IMR-90 (cell line): ENCODE measurements at regions of chr11 and their contacts with region 1.

Region 1: DNA sequence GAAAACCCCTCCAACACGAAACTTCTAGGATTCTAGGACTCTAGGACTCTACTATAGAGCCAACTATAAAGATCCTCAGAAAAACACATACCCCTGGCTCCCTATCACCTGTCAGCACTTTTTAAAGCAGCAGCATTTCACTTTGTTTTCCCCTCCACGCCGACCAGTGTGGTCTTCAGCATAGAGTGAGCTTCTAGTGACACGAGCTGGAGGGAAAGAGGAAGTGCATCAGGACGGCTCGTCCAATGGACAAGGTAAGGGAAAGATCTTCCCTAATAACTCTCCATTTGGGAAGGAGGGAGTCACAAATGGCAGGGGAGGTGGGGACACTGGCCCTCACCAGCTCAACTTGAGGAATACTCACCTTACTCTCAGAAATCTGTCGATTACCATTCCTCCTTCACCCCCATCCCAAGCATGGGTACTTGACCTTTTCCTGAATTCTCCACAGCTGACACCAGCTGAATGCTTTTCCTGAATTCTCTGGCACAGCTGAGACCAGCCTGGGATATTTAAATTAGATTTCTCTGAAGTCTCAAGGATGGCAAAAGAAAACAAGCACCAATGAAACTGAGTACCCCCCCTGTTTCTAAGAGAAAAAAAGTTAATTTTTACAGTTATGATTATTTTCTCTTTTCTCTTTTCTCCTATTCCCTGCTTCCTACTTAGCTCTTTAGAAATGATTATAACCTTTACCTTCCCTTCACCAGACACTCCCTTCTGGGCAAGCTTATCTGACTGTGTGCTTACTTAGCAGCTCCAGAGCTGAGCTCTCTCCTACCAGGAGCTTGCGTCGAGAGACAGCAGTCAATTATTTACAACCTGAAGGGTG is 33.3 kb upstream of the NNMT start:
- DNase-seq: peak; percentile 54
- ATAC-seq: peak; percentile 91
- H3K4me3 ChIP-seq: no peak overlapping the region
- H3K27ac ChIP-seq: no peak overlapping the region
- H3K4me1 ChIP-seq: no peaks in the 10 kb centered on the region
- H3K27me3 ChIP-seq: peaks cover 43% of the 10 kb centered on the region
- CTCF ChIP-seq: peak; percentile 73
- POLR2A ChIP-seq: no peak
- RAD21 ChIP-seq: peak; percentile 83

Region 2: GRCh38 chr11:112514011-112514740 is 1748.7 kb before region 1 on chr11:
- CTCF ChIA-PET with region 1: no interaction called
- POLR2A ChIA-PET with region 1: no interaction called
- dilution Hi-C with region 1: no loop called
- in situ Hi-C with region 1: no loop called
- intact Hi-C with region 1: loop called (anchors 5 kb)
- DNase-seq: no peak
- ATAC-seq: no peak
- H3K4me3 ChIP-seq: no peak overlapping the region
- H3K27ac ChIP-seq: no peak overlapping the region
- H3K4me1 ChIP-seq: no peaks in the 10 kb centered on the region; the same call in 1 of the 2 replicates
- H3K27me3 ChIP-seq: no peaks in the 10 kb centered on the region; the same call in none of the 2 replicates
- CTCF ChIP-seq: no peak
- POLR2A ChIP-seq: no peak
- RAD21 ChIP-seq: no peak

Region 3: GRCh38 chr11:113773416-113774173 is 489.3 kb before region 1 on chr11 and contains the start of gene ZW10:
- CTCF ChIA-PET with region 1: no interaction called
- POLR2A ChIA-PET with region 1: no interaction called
- dilution Hi-C with region 1: no loop called
- in situ Hi-C with region 1: no loop called
- intact Hi-C with region 1: loop called (anchors 1 kb)
- DNase-seq: peak; percentile 96
- ATAC-seq: peak; percentile 100
- H3K4me3 ChIP-seq: peak within 1 kb of the TSS; percentile 90
- H3K27ac ChIP-seq: peak within 1 kb of the TSS; percentile 72
- H3K4me1 ChIP-seq: peaks cover 2% of the 10 kb centered on the region; the same call in 1 of the 2 replicates
- H3K27me3 ChIP-seq: peaks cover 3% of the 10 kb centered on the region
- CTCF ChIP-seq: peak; percentile 83
- POLR2A ChIP-seq: peak; percentile 61; the same call in 1 of the 2 replicates
- RAD21 ChIP-seq: no peak
- total RNA-seq, gene ZW10: 30.6 and 33.3 TPM in 2 replicates

Region 4: GRCh38 chr11:113896156-113896879 is 366.6 kb before region 1 on chr11:
- CTCF ChIA-PET with region 1: interaction called, 43 read pairs
- POLR2A ChIA-PET with region 1: no interaction called
- dilution Hi-C with region 1: no loop called
- in situ Hi-C with region 1: loop called (anchors 5 kb)
- intact Hi-C with region 1: loop called (anchors 1 kb)
- DNase-seq: peak; percentile 22
- ATAC-seq: peak; percentile 88
- H3K4me3 ChIP-seq: no peak overlapping the region
- H3K27ac ChIP-seq: no peak overlapping the region
- H3K4me1 ChIP-seq: no peaks in the 10 kb centered on the region
- H3K27me3 ChIP-seq: peaks cover 9% of the 10 kb centered on the region
- CTCF ChIP-seq: peak; percentile 70
- POLR2A ChIP-seq: no peak
- RAD21 ChIP-seq: peak; percentile 50

Region 5: GRCh38 chr11:114036156-114036811 is 226.6 kb before region 1 on chr11:
- CTCF ChIA-PET with region 1: interaction called, 29 read pairs
- POLR2A ChIA-PET with region 1: no interaction called
- dilution Hi-C with region 1: no loop called
- in situ Hi-C with region 1: loop called (anchors 5 kb)
- intact Hi-C with region 1: loop called (anchors 1 kb)
- DNase-seq: peak; percentile 18
- ATAC-seq: peak; percentile 95
- H3K4me3 ChIP-seq: peak overlapping the region; percentile 5; the same call in 1 of the 2 replicates
- H3K27ac ChIP-seq: no peak overlapping the region
- H3K4me1 ChIP-seq: no peaks in the 10 kb centered on the region
- H3K27me3 ChIP-seq: peaks cover 10% of the 10 kb centered on the region; the same call in 1 of the 2 replicates
- CTCF ChIP-seq: peak; percentile 61
- POLR2A ChIP-seq: no peak
- RAD21 ChIP-seq: peak; percentile 59

Region 6: DNA sequence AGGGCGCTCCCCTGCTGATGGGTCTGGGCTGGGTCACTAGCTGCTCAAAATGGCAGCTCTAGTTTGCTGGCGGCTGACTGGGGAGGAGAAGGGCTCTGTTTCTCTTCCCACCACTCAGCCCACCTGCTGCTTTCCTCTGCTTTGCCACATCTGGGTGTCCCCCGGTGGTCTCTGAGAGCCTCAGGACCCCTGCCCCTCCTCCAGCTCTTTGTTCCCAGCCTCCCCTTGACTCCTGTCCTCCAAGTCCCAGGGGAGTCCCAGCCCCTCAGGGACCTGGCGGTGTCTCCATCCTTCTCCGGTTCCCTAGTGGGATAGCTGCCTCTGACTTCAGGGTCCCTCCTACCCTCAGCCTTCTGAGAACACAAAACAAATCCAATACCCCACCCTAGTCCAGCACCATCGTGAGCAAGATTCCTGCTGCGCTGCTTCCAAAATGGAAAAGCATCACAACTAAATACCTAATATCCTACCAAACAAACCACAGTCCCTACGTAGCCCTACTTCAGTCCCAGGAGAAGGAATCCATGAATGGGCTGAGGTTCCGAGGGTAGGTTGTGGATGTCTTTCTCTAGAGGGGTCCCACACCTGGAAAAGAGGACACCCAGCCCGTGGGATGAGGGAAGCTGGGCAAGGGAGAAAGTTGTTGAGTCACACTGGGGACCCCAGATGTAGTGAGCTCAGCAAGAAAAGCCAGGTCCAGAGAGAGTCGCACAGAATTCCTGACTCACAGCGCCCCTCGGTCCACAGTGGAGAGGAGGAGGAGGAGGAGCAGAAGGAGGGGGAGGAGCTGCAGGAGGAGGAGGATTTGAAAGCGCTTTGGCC is 11.7 kb before region 1 on chr11:
- CTCF ChIA-PET with region 1: interaction called, 13 read pairs
- POLR2A ChIA-PET with region 1: no interaction called
- dilution Hi-C with region 1: no loop called
- in situ Hi-C with region 1: no loop called
- intact Hi-C with region 1: no loop called
- DNase-seq: no peak
- ATAC-seq: no peak
- H3K4me3 ChIP-seq: no peak overlapping the region
- H3K27ac ChIP-seq: no peak overlapping the region
- H3K4me1 ChIP-seq: no peaks in the 10 kb centered on the region
- H3K27me3 ChIP-seq: peaks cover 16% of the 10 kb centered on the region; the same call in 1 of the 2 replicates
- CTCF ChIP-seq: no peak
- POLR2A ChIP-seq: no peak
- RAD21 ChIP-seq: no peak